Vagina (tissue), 2 donors: ENCODE measurements at regions of chr11 and their contacts with region 1.

Region 1: DNA sequence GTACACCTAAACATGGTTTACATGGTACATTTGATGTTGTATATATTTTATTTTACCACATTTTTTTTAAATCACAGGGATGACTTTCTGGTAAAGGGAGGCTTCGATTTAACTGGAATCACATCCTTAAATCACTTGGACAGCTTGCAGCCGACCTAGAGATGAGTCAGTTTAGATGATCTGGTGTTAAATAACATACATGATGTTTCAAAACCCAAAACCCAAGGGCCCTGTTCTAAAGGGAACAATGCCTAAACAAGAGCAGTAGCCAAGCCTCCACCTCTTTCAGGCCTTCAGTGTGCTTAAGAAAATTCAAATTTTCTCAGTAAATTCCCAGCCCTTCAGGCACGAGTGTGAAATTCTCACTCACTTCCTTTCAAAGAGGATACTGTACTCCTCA is 108.8 kb downstream of the WT1 start:
- DNase-seq: no peak
- H3K4me3 ChIP-seq: no peak overlapping the region
- H3K27ac ChIP-seq: no peak overlapping the region
- H3K4me1 ChIP-seq: no peaks in the 10 kb centered on the region
- H3K27me3 ChIP-seq: no peaks in the 10 kb centered on the region
- CTCF ChIP-seq: no peak
- POLR2A ChIP-seq: no peak

Region 2: GRCh38 chr11:32374261-32374711 is 47.8 kb after region 1 on chr11:
- intact Hi-C with region 1: no loop called
- DNase-seq: no peak
- H3K4me3 ChIP-seq: no peak overlapping the region
- H3K27ac ChIP-seq: no peak overlapping the region
- H3K4me1 ChIP-seq: no peaks in the 10 kb centered on the region
- H3K27me3 ChIP-seq: no peaks in the 10 kb centered on the region
- CTCF ChIP-seq: peak in 1 of 3 experiments; percentile 25
- POLR2A ChIP-seq: no peak

Region 3: DNA sequence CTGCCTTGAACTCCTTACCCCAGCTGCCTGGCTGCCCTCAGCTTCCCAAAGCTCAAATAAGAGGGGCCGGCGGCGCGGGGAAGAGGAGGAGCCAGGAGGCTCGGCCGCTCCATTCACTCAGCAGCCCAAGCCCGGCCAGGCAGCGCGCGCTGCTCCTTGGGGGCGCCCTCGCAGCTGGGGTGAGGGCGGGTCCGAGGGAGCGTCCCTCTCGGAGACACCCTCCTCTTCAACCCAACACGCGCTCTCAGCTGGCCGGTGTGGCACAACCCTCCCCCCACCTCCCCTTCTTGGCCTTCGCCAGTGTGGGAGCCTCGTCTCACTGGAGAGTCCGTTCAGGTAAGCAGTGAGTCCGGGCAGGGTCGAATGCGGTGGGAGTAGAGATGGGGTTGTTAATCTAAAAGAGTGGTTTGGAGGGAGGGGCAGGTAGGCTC is 109.0 kb after region 1 on chr11 and contains the start of gene WT1:
- intact Hi-C with region 1: loop called (anchors 10 kb)
- DNase-seq: peak in 1 of 2 donors; percentile 94
- H3K4me3 ChIP-seq: peak within 1 kb of the TSS; percentile 47 to 83
- H3K27ac ChIP-seq: peak within 1 kb of the TSS; percentile 89
- H3K4me1 ChIP-seq: peaks cover 45% of the 10 kb centered on the region
- H3K27me3 ChIP-seq: no peaks in the 10 kb centered on the region
- CTCF ChIP-seq: no peak
- POLR2A ChIP-seq: peak in 1 of 2 donors; percentile 44
- total RNA-seq, gene WT1: 32.7 TPM